Psoas muscle (tissue), 8 donors: ENCODE measurements at regions of chr17 and their contacts with region 1.

Region 1: GRCh38 chr17:66348584-66349165 is 46.3 kb downstream of the PRKCA start:
- DNase-seq: no peak
- ATAC-seq: peak in 3 of 4 donors; percentile 85 to 90 (median 87)
- H3K4me3 ChIP-seq: no peak overlapping the region
- H3K27ac ChIP-seq: peak overlapping the region; percentile 71
- H3K4me1 ChIP-seq: peaks cover 14% of the 10 kb centered on the region
- H3K27me3 ChIP-seq: no peaks in the 10 kb centered on the region
- CTCF ChIP-seq: no peak

Region 2: GRCh38 chr17:66301797-66302741 is 46.6 kb before region 1 on chr17 and contains the start of gene PRKCA:
- intact Hi-C with region 1: loop called in 1 of 2 experiments (anchors 2 kb)
- DNase-seq: peak; percentile 81 to 85
- ATAC-seq: peak; percentile 82 to 88 (median 86)
- H3K4me3 ChIP-seq: peak within 1 kb of the TSS; percentile 90
- H3K27ac ChIP-seq: peak within 1 kb of the TSS; percentile 80
- H3K4me1 ChIP-seq: peaks cover 7% of the 10 kb centered on the region
- H3K27me3 ChIP-seq: no peaks in the 10 kb centered on the region
- CTCF ChIP-seq: no peak
- total RNA-seq, gene PRKCA: 4.1 to 15.5 (median 8.8) TPM

Region 3: GRCh38 chr17:66673668-66674315 is 325.1 kb after region 1 on chr17:
- intact Hi-C with region 1: loop called in 1 of 2 experiments (anchors 10 kb)
- DNase-seq: no peak
- ATAC-seq: peak; percentile 40 to 65 (median 58)
- H3K4me3 ChIP-seq: no peak overlapping the region
- H3K27ac ChIP-seq: no peak overlapping the region
- H3K4me1 ChIP-seq: peaks cover 8% of the 10 kb centered on the region
- H3K27me3 ChIP-seq: no peaks in the 10 kb centered on the region
- CTCF ChIP-seq: peak; percentile 69